A673 (cell line): ENCODE measurements at regions of chr9 and their contacts with region 1.

Region 1: GRCh38 chr9:86645303-86645702 is 291.1 kb upstream of the TUT7 start:
- DNase-seq: no peak
- H3K4me3 ChIP-seq: no peak overlapping the region
- H3K27ac ChIP-seq: peak overlapping the region; percentile 97
- H3K4me1 ChIP-seq: peaks cover 87% of the 10 kb centered on the region
- H3K27me3 ChIP-seq: no peaks in the 10 kb centered on the region
- CTCF ChIP-seq: no peak

Region 2: DNA sequence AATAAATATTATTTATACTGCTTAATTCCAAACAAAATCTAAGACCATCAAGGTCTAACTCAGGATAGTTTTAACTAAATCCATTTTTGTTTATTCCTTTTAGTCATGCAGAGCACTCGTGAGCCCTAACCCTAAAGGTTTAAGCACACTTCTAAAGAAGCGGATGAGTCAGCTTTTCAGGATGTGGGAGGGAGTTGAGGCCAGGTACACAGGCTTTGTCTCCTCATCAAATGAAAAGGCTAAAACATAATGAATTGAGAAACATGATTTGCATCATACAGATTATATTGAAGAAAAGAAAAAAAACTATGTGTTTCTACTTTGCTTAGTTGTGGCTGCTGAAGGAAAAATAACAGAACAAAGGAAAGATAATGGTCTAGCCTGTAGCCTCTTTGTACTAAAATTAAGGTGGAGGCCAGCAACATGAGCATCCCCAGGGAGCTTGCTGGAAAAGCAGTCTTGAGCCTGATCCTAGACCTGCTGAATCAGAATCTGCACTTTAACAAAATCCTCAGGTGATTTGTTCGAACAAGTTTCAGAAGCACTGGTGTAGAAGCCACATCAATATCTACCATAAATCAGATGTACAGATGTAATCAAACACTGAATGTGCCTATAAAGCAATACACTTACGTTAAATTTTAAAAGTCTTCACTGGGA is 341.9 kb before region 1 on chr9:
- CTCF ChIA-PET with region 1: no interaction called
- POLR2A ChIA-PET with region 1: no interaction called
- intact Hi-C with region 1: no loop called
- DNase-seq: no peak
- H3K4me3 ChIP-seq: no peak overlapping the region
- H3K27ac ChIP-seq: peak overlapping the region; percentile 31
- H3K4me1 ChIP-seq: peaks cover 25% of the 10 kb centered on the region
- H3K27me3 ChIP-seq: no peaks in the 10 kb centered on the region
- CTCF ChIP-seq: no peak

Region 3: DNA sequence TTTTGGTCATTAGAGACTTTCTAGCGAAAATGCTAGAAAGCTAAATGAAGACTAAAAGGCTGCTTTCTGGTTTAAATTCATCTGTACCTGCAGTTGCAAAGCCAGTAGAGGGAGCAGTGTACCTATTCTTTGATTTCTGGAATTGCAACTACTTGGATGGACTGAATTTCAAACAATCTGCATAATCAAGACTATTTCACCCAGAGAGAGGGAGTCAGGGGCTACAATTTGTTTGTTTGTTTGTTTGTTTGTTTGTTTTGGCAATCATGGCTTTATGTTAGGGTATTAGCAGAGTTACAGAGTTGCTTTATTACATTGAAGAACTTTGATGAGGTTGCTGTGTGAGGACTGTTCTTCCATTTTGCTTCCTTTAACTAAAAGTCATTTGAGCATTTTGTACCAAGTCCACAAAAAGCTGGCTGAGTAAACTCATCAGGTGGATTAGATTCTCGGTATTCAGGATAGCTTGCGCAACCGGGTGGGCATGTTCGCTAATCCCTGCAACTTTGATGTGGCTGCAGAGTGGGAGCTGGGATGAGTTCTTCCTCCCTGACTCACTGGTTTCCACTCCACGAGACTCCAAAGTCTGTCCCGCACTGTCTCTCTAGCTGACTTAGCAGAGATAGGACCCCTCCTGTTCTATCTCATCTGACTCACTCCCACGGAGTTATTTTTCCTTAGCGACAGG is 211.1 kb before region 1 on chr9:
- CTCF ChIA-PET with region 1: no interaction called
- POLR2A ChIA-PET with region 1: no interaction called
- intact Hi-C with region 1: loop called (anchors 1 kb)
- DNase-seq: peak; percentile 84
- H3K4me3 ChIP-seq: peak overlapping the region; percentile 9
- H3K27ac ChIP-seq: peak overlapping the region; percentile 69
- H3K4me1 ChIP-seq: peaks cover 9% of the 10 kb centered on the region
- H3K27me3 ChIP-seq: no peaks in the 10 kb centered on the region
- CTCF ChIP-seq: peak; percentile 92

Region 4: DNA sequence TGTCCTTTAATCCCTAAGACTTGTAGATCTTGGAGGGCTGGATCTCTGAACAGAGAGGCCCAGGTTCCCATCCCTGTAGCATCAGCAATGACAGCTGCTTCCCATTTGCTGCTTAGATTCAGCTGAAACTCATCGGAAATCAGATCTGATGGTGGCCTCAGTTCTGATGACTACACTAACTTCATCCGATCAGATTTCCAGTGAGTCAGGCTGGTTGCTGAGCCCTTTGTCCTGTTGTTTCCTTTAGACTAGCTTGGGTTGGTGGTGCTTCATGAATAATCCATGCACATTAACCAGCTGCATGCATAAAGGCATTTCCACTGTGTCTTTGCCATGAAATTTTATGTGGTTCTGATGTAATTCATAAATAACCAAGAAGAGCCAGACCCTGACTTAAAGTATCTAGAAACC is 95.9 kb before region 1 on chr9:
- CTCF ChIA-PET with region 1: no interaction called
- POLR2A ChIA-PET with region 1: no interaction called
- intact Hi-C with region 1: loop called (anchors 5 kb)
- DNase-seq: peak; percentile 99
- H3K4me3 ChIP-seq: no peak overlapping the region
- H3K27ac ChIP-seq: peak overlapping the region; percentile 96
- H3K4me1 ChIP-seq: peaks cover 74% of the 10 kb centered on the region
- H3K27me3 ChIP-seq: no peaks in the 10 kb centered on the region
- CTCF ChIP-seq: no peak

Region 5: GRCh38 chr9:86633945-86634344 is 11.4 kb before region 1 on chr9:
- CTCF ChIA-PET with region 1: no interaction called
- POLR2A ChIA-PET with region 1: no interaction called
- intact Hi-C with region 1: no loop called
- DNase-seq: no peak
- H3K4me3 ChIP-seq: no peak overlapping the region
- H3K27ac ChIP-seq: no peak overlapping the region
- H3K4me1 ChIP-seq: peaks cover 23% of the 10 kb centered on the region
- H3K27me3 ChIP-seq: no peaks in the 10 kb centered on the region
- CTCF ChIP-seq: no peak

Region 6: DNA sequence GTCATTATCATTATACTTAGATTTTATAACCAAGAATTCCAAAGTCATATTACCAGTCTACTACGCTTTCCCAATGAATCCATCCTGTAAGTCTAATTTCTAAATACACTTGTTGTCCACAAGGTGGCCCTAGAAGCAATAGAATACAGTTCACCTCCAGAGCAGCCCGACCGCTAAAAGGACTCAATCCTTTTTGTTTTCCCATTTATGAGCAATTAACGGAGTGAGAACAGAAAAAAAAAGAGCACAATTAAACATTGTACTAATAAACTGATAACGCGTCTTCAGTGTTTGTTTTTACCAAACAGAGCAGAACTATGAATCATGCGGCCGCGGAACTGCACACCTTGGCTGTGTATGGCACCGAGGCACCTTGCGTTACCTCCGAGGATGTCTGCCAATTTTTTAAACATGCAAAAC is 691.6 kb after region 1 on chr9:
- CTCF ChIA-PET with region 1: no interaction called
- POLR2A ChIA-PET with region 1: interaction called, 6 read pairs
- intact Hi-C with region 1: loop called (anchors 5 kb)
- DNase-seq: peak; percentile 94
- H3K4me3 ChIP-seq: peak overlapping the region; percentile 49
- H3K27ac ChIP-seq: peak overlapping the region; percentile 77
- H3K4me1 ChIP-seq: peaks cover 45% of the 10 kb centered on the region
- H3K27me3 ChIP-seq: no peaks in the 10 kb centered on the region
- CTCF ChIP-seq: peak; percentile 66

Region 7: GRCh38 chr9:87479801-87480201 is 834.5 kb after region 1 on chr9:
- CTCF ChIA-PET with region 1: no interaction called
- POLR2A ChIA-PET with region 1: no interaction called
- intact Hi-C with region 1: loop called (anchors 1 kb)
- DNase-seq: no peak
- H3K4me3 ChIP-seq: no peak overlapping the region
- H3K27ac ChIP-seq: peak overlapping the region; percentile 68
- H3K4me1 ChIP-seq: peaks cover 51% of the 10 kb centered on the region
- H3K27me3 ChIP-seq: no peaks in the 10 kb centered on the region
- CTCF ChIP-seq: no peak